ENCODE measurements at regions of chr3 and their contacts with region 1.

Region 1: GRCh38 chr3:194691481-194692283 is 6.0 kb downstream of the FAM43A start:
- DNase-seq: no peak
- H3K4me3 ChIP-seq: no peak overlapping the region
- H3K27ac ChIP-seq: no peak overlapping the region
- H3K4me1 ChIP-seq: peaks cover 14% of the 10 kb centered on the region
- H3K27me3 ChIP-seq: no peaks in the 10 kb centered on the region
- CTCF ChIP-seq: no peak

Region 2: GRCh38 chr3:194967151-194968117 is 275.8 kb after region 1 on chr3:
- intact Hi-C with region 1: loop called (anchors 10 kb)
- DNase-seq: peak; percentile 4
- H3K4me3 ChIP-seq: no peak overlapping the region
- H3K27ac ChIP-seq: no peak overlapping the region
- H3K4me1 ChIP-seq: no peaks in the 10 kb centered on the region
- H3K27me3 ChIP-seq: no peaks in the 10 kb centered on the region
- CTCF ChIP-seq: no peak